HCT116 (cell line): ENCODE measurements at regions of chrX and their contacts with region 1.

Region 1: DNA sequence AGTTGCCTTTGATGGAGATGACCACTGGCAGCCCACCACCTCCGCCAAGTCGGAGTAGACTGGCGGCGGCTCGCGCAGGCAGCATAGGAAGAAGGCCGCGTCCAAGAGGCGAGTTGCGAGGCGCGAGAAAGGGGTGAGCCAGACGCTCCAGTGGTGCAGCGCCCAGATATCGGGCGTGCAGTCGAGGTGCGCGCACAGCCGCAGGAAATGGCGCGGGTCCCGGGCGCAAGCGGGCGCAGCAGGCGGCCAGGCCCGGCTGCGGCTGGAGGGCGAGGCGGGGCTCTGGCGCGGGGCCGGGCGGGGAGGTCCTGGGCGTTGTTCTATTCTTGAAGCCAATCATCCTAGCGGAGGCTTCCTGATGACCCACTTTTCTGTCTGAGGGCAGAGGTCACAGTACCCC is 13.2 kb upstream of the PGRMC1 start:
- DNase-seq: no peak
- ATAC-seq: no peak
- H3K4me3 ChIP-seq: no peak overlapping the region
- H3K27ac ChIP-seq: no peak overlapping the region
- H3K4me1 ChIP-seq: no peaks in the 10 kb centered on the region
- H3K27me3 ChIP-seq: no peaks in the 10 kb centered on the region
- CTCF ChIP-seq: no peak
- POLR2A ChIP-seq: no peak
- RAD21 ChIP-seq: no peak

Region 2: DNA sequence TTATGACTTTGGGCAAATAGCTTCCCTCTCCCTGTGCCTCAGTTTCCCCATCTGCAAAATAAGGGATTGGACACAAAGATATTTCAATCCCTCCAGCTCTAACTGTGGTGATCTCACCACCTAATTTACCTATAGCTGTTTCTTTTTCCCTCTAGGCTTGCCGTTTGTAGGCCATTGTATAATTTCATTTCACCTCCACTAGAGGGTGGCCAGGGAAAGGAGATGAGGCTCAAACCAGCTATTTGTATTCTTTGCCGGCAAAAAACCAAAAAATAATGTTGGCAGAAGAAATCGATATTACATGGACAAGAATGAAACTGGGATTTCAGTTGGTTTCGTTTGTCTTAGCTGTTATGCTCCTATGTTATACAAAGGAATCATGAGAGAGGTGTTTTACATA is 763.4 kb before region 1 on chrX:
- CTCF ChIA-PET with region 1: no interaction called
- POLR2A ChIA-PET with region 1: no interaction called
- RAD21 ChIA-PET with region 1: no interaction called
- intact Hi-C with region 1: no loop called
- DNase-seq: no peak
- ATAC-seq: peak; percentile 67
- H3K4me3 ChIP-seq: no peak overlapping the region
- H3K27ac ChIP-seq: no peak overlapping the region
- H3K4me1 ChIP-seq: no peaks in the 10 kb centered on the region
- H3K27me3 ChIP-seq: no peaks in the 10 kb centered on the region
- CTCF ChIP-seq: peak; percentile 27 to 47 (median 45); a peak in 5 of 6 replicates
- POLR2A ChIP-seq: no peak
- RAD21 ChIP-seq: peak; percentile 71

Region 3: DNA sequence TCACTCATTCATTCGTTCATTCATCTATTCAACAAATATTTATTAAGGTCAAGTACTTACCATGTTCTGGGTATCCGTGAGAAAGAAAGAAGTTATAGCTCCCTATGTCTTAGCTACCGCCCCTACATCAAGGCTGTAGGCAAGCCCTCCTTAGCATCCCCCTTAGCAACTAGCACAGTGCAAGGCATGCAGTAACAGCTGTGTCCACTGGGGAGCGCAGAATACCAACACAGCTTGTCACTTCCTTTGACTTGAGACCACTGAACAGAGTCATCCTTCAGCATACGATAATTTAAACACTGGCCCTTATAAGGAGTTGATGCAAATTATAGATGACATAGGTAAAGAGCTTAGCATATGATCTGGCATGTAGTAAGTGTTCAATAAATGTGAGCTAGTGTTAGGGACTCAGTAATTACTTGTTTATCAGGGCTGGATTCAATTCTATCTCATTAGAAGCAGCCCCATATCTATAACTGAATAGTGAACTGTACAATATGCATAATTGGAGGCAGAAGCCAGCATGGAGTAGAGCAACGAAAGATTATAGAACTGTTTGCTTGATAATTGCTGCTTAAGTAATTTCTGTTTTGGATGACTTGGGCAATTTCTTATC is 104.0 kb before region 1 on chrX:
- CTCF ChIA-PET with region 1: no interaction called
- POLR2A ChIA-PET with region 1: no interaction called
- RAD21 ChIA-PET with region 1: no interaction called
- intact Hi-C with region 1: loop called (anchors 1 kb)
- DNase-seq: peak; percentile 27
- ATAC-seq: peak; percentile 99
- H3K4me3 ChIP-seq: no peak overlapping the region
- H3K27ac ChIP-seq: no peak overlapping the region
- H3K4me1 ChIP-seq: no peaks in the 10 kb centered on the region
- H3K27me3 ChIP-seq: no peaks in the 10 kb centered on the region
- CTCF ChIP-seq: peak; percentile 38 to 76 (median 66); a peak in 5 of 6 replicates
- POLR2A ChIP-seq: no peak
- RAD21 ChIP-seq: peak; percentile 65

Region 4: GRCh38 chrX:119145241-119145653 is 77.7 kb before region 1 on chrX:
- CTCF ChIA-PET with region 1: no interaction called
- POLR2A ChIA-PET with region 1: no interaction called
- RAD21 ChIA-PET with region 1: no interaction called
- intact Hi-C with region 1: loop called (anchors 1 kb)
- DNase-seq: peak; percentile 12
- ATAC-seq: peak; percentile 82
- H3K4me3 ChIP-seq: no peak overlapping the region
- H3K27ac ChIP-seq: no peak overlapping the region
- H3K4me1 ChIP-seq: no peaks in the 10 kb centered on the region
- H3K27me3 ChIP-seq: no peaks in the 10 kb centered on the region
- CTCF ChIP-seq: peak; percentile 53 to 61 (median 57)
- POLR2A ChIP-seq: no peak
- RAD21 ChIP-seq: peak; percentile 69